ENCODE measurements at regions of chr12 and their contacts with region 1.

Region 1: GRCh38 chr12:46430340-46430948 is 57.9 kb upstream of the SLC38A2 start:
- DNase-seq: peak in 4 of 14 experiments; percentile 14 to 55 (median 35)
- ATAC-seq: peak; percentile 74
- H3K4me3 ChIP-seq: no peak overlapping the region
- H3K4me3 Mint-ChIP-seq: no peak overlapping the region
- H3K27ac ChIP-seq: no peak overlapping the region
- H3K27ac Mint-ChIP-seq: peak overlapping the region; percentile 8
- H3K4me1 ChIP-seq: no peaks in the 10 kb centered on the region
- H3K4me1 Mint-ChIP-seq: peaks cover 7% of the 10 kb centered on the region
- H3K27me3 ChIP-seq: no peaks in the 10 kb centered on the region
- H3K27me3 Mint-ChIP-seq: no peaks in the 10 kb centered on the region
- CTCF ChIP-seq: no peak

Region 2: GRCh38 chr12:46382964-46383653 is 47.3 kb before region 1 on chr12:
- CTCF ChIA-PET with region 1: no interaction called
- POLR2A ChIA-PET with region 1: no interaction called
- intact Hi-C with region 1: loop called in 1 of 2 experiments (anchors 5 kb)
- DNase-seq: peak; percentile 74 to 97 (median 88)
- ATAC-seq: peak; percentile 73
- H3K4me3 ChIP-seq: peak overlapping the region; percentile 83
- H3K4me3 Mint-ChIP-seq: peak overlapping the region; percentile 93
- H3K27ac ChIP-seq: peak overlapping the region; percentile 83 to 90
- H3K27ac Mint-ChIP-seq: peak overlapping the region; percentile 99
- H3K4me1 ChIP-seq: peaks cover 16% of the 10 kb centered on the region
- H3K4me1 Mint-ChIP-seq: peaks cover 44% of the 10 kb centered on the region
- H3K27me3 ChIP-seq: no peaks in the 10 kb centered on the region
- H3K27me3 Mint-ChIP-seq: no peaks in the 10 kb centered on the region
- CTCF ChIP-seq: peak; percentile 4